ENCODE measurements at regions of chr21 and their contacts with region 1.

Region 1: DNA sequence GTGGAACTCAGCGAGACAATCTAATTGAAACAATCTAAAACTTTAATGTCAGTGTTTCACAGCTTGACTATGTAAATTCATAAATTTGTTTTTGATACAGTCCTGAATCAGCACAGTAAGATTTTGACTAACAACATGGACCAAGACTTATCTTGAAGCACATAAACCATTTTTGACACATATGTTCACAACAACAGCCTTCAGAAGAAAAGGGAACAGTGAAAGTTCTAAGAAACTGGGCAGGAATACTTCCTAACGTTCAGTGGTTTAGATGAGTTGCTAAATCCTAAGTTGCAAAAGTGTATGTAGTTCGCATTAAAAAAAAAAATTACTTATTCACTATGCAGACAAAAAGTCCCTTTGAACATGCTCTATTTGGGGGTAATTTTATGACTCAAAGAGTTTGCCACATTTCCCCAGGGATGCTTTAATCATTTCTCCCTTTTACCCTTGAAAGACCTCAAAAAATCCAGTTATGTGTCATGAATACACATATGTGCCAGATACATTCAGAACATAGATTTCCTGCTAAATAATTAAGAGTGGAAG is 120.2 kb downstream of the MRPL39 start:
- DNase-seq: no peak
- H3K4me3 Mint-ChIP-seq: peak overlapping the region; percentile 58
- H3K27ac Mint-ChIP-seq: peak overlapping the region; percentile 87
- H3K4me1 Mint-ChIP-seq: peaks cover 76% of the 10 kb centered on the region
- H3K27me3 Mint-ChIP-seq: no peaks in the 10 kb centered on the region

Region 2: DNA sequence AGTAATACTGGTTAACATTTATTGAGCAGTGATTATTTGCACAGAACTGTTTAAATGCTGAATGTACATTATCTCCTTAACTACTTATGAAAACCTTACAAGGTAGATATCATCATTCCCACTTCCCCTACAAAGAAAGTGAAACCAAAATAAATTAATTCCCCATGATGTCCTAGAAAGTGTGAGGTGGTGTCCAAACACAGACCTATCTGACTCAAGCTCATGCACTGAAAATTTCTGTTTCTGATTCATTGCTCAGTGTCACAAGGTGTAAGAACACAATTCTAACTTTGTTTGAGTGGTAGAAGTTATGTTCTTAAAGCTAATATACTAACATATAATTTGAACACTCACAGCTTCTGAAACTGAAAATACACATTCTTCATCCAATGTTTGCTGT is 58.6 kb before region 1 on chr21:
- CTCF ChIA-PET with region 1: interaction called, 5 read pairs
- POLR2A ChIA-PET with region 1: no interaction called
- intact Hi-C with region 1: loop called (anchors 1 kb)
- DNase-seq: no peak
- H3K4me3 Mint-ChIP-seq: no peak overlapping the region
- H3K27ac Mint-ChIP-seq: peak overlapping the region; percentile 13
- H3K4me1 Mint-ChIP-seq: peaks cover 51% of the 10 kb centered on the region
- H3K27me3 Mint-ChIP-seq: no peaks in the 10 kb centered on the region

Region 3: DNA sequence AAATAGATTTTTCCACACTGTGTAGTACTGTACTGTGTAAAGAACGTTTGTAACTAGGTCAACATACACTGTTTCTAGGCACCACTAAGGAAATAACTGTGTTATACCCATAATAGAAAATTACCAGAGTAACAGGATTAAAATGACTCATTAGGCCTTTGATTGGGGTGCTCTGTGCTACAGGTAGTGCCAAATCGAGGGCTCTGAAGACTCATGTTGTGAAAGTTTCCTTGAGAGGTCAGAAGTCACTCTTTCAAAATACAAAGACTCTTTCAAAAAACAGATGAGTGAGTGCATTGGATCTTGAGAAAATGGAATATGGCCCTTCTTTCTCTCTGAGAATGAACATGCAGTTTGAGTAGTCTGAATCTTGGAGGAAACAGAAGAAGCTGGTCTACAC is 22.8 kb before region 1 on chr21:
- CTCF ChIA-PET with region 1: interaction called, 6 read pairs
- POLR2A ChIA-PET with region 1: interaction called, 9 read pairs
- intact Hi-C with region 1: loop called (anchors 1 kb)
- DNase-seq: peak; percentile 38
- H3K4me3 Mint-ChIP-seq: peak overlapping the region; percentile 50
- H3K27ac Mint-ChIP-seq: peak overlapping the region; percentile 94
- H3K4me1 Mint-ChIP-seq: peaks cover 77% of the 10 kb centered on the region
- H3K27me3 Mint-ChIP-seq: no peaks in the 10 kb centered on the region

Region 4: DNA sequence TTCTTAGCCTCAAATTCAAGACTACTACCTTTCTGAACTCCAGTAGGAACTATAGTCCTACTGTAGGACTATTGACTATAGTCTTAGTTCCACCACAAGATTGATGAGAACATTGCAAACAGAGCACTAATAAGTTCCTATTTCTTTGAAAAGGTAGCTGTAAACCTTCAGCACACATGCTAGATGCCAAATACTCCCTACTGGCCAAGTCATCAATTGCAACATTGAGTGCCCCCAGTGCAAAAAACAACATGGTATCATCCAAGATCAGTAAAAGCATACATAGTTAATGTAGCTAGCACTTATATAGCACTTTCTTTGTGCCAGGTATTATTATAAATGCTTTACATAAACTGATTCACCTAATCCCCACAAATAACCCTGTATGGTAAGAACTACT is 20.4 kb after region 1 on chr21:
- CTCF ChIA-PET with region 1: interaction called, 10 read pairs
- POLR2A ChIA-PET with region 1: interaction called, 30 read pairs
- intact Hi-C with region 1: loop called (anchors 1 kb)
- DNase-seq: no peak
- H3K4me3 Mint-ChIP-seq: peak overlapping the region; percentile 24
- H3K27ac Mint-ChIP-seq: peak overlapping the region; percentile 85
- H3K4me1 Mint-ChIP-seq: peaks cover 55% of the 10 kb centered on the region
- H3K27me3 Mint-ChIP-seq: no peaks in the 10 kb centered on the region

Region 5: GRCh38 chr21:25561668-25562641 is 74.8 kb after region 1 on chr21:
- CTCF ChIA-PET with region 1: interaction called, 3 read pairs
- POLR2A ChIA-PET with region 1: interaction called, 81 read pairs
- intact Hi-C with region 1: loop called (anchors 2 kb)
- DNase-seq: peak; percentile 89
- H3K4me3 Mint-ChIP-seq: peak overlapping the region; percentile 80
- H3K27ac Mint-ChIP-seq: peak overlapping the region; percentile 94
- H3K4me1 Mint-ChIP-seq: peaks cover 52% of the 10 kb centered on the region
- H3K27me3 Mint-ChIP-seq: no peaks in the 10 kb centered on the region

Region 6: GRCh38 chr21:25956993-25957714 is 470.0 kb after region 1 on chr21:
- CTCF ChIA-PET with region 1: no interaction called
- POLR2A ChIA-PET with region 1: no interaction called
- intact Hi-C with region 1: no loop called
- DNase-seq: no peak
- H3K4me3 Mint-ChIP-seq: no peak overlapping the region
- H3K27ac Mint-ChIP-seq: no peak overlapping the region
- H3K4me1 Mint-ChIP-seq: no peaks in the 10 kb centered on the region
- H3K27me3 Mint-ChIP-seq: no peaks in the 10 kb centered on the region

Measured in activated CD4-positive, alpha-beta memory T cell treated with anti-CD3 and anti-CD28 coated beads for 36 hours (primary cell).